ENCODE measurements at regions of chr20 and their contacts with region 1.

Region 1: GRCh38 chr20:9903048-9903655 is 64.3 kb upstream of the PAK5 start:
- DNase-seq: peak; percentile 26
- ATAC-seq: peak; percentile 71
- H3K4me3 ChIP-seq: no peak overlapping the region
- H3K27ac ChIP-seq: no peak overlapping the region
- H3K4me1 ChIP-seq: no peaks in the 10 kb centered on the region
- H3K27me3 ChIP-seq: peaks cover 12% of the 10 kb centered on the region; the same call in 1 of the 2 replicates
- CTCF ChIP-seq: peak in 2 of 3 experiments; percentile 76 to 77; a peak in 4 of 6 replicates
- POLR2A ChIP-seq: no peak
- RAD21 ChIP-seq: no peak; the same call in 1 of the 2 replicates

Region 2: DNA sequence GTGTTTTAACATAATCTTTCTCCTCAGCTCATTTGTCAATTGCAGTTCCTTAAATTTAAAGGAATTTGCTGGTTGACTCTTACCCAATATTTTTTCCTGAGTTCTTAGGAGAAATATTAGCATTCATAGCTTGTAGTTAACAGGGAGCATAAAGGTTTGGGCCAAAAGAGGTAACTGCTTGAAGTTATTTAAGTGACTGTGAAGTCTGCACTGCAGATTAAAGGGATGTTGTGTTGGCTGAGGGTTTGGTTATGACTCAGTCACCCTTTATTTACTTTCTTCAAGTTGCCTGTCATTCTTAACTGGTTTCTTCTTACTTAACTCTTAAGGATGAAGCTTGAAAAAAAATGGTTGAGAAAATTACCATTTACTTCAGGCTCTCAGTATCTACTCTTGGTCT is 609.1 kb before region 1 on chr20:
- CTCF ChIA-PET with region 1: no interaction called
- POLR2A ChIA-PET with region 1: no interaction called
- RAD21 ChIA-PET with region 1: no interaction called
- intact Hi-C with region 1: no loop called
- DNase-seq: no peak
- ATAC-seq: no peak
- H3K4me3 ChIP-seq: no peak overlapping the region
- H3K27ac ChIP-seq: no peak overlapping the region
- H3K4me1 ChIP-seq: peaks cover 6% of the 10 kb centered on the region in 2 experiments; a peak in 2 of 4 replicates
- H3K27me3 ChIP-seq: no peaks in the 10 kb centered on the region
- CTCF ChIP-seq: no peak
- POLR2A ChIP-seq: no peak
- RAD21 ChIP-seq: no peak

Region 3: DNA sequence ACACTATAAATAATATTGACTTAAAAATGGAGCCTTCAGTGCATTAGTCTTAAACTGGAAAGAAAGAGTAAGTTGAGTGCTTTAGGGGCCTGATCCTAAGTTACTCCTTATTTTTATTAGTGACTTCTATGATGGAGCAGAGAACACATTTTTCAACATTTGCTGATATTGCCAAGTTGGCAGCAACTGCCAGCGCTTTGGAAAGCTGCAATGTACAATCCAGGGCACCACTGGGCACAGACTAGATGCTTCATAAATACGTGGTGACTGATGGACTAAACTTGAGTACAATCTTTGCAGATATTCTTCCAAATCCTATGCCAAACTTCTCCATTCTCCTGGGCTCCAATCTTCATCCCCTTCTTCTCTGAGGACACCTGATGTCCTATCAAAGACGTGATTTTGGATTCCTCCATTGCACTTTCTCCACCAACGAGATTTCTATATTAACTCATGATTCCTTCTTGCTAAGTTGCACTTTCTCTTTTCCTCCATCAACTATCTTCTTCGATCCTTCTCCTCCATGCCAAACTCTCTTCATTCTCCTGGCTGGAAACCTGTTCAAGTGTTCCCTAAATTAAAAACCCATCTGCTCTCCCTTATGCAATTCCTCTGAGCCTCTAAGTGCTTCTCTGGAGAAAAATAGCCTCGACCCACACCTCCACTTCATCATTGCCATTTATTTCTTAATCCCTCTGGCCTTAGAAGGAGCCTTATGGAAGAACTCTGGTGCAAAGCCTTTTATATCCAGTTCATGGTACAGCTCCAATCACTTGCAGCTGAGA is 35.8 kb before region 1 on chr20:
- CTCF ChIA-PET with region 1: no interaction called
- POLR2A ChIA-PET with region 1: no interaction called
- RAD21 ChIA-PET with region 1: no interaction called
- intact Hi-C with region 1: no loop called
- DNase-seq: no peak
- ATAC-seq: no peak
- H3K4me3 ChIP-seq: no peak overlapping the region
- H3K27ac ChIP-seq: no peak overlapping the region
- H3K4me1 ChIP-seq: no peaks in the 10 kb centered on the region
- H3K27me3 ChIP-seq: peaks cover 4% of the 10 kb centered on the region; the same call in 1 of the 2 replicates
- CTCF ChIP-seq: no peak
- POLR2A ChIP-seq: no peak
- RAD21 ChIP-seq: no peak

Region 4: DNA sequence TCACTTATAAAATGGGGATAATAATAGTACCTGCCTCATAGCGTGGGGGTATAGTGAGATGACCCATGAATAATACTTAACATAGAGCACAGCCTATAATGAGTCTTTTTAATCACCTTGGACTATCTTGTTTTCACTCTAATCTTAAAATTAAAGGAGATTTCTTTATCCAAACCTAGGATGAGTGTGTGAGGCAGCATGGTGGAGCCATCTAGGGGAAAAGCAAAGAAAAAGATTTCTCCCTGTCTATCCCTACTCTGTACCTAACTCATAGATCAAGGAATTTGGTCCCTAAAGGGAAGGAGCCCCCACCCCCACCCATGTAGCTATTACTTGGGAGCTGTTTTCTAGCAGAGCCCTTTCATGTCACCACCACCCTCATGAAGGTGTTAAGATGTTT is 19.1 kb before region 1 on chr20:
- CTCF ChIA-PET with region 1: interaction called, 10 read pairs
- POLR2A ChIA-PET with region 1: no interaction called
- RAD21 ChIA-PET with region 1: no interaction called
- intact Hi-C with region 1: no loop called
- DNase-seq: no peak
- ATAC-seq: peak; percentile 88
- H3K4me3 ChIP-seq: no peak overlapping the region
- H3K27ac ChIP-seq: no peak overlapping the region
- H3K4me1 ChIP-seq: peaks cover 0 to 4% of the 10 kb centered on the region in 2 experiments; a peak in 1 of 4 replicates
- H3K27me3 ChIP-seq: no peaks in the 10 kb centered on the region
- CTCF ChIP-seq: peak; percentile 15 to 44 (median 32); a peak in 3 of 6 replicates
- POLR2A ChIP-seq: no peak
- RAD21 ChIP-seq: peak; percentile 47

Region 5: DNA sequence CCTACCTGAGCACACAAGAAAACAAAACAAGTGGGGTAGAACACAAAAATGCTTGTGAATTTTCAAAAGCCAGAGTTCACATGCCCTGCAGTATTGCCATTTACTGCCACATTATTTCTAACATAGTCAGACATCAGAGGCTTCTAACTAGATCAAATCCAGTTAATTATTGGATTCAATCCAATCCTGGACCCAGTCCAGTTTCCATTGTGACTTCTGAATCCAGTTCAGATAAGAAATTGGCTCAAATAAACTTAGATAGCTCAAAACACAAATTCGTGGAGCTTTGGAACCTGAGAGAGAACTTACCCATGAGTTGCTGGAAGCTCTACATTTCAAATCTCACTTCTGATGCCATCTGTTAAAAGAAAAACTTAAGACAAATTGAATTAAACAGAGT is 46.4 kb after region 1 on chr20:
- CTCF ChIA-PET with region 1: interaction called, 11 read pairs
- POLR2A ChIA-PET with region 1: no interaction called
- RAD21 ChIA-PET with region 1: no interaction called
- intact Hi-C with region 1: no loop called
- DNase-seq: no peak
- ATAC-seq: no peak
- H3K4me3 ChIP-seq: no peak overlapping the region
- H3K27ac ChIP-seq: no peak overlapping the region
- H3K4me1 ChIP-seq: peaks cover 14 to 16% of the 10 kb centered on the region in 2 experiments; a peak in 3 of 4 replicates
- H3K27me3 ChIP-seq: no peaks in the 10 kb centered on the region
- CTCF ChIP-seq: no peak
- POLR2A ChIP-seq: no peak
- RAD21 ChIP-seq: no peak

Region 6: DNA sequence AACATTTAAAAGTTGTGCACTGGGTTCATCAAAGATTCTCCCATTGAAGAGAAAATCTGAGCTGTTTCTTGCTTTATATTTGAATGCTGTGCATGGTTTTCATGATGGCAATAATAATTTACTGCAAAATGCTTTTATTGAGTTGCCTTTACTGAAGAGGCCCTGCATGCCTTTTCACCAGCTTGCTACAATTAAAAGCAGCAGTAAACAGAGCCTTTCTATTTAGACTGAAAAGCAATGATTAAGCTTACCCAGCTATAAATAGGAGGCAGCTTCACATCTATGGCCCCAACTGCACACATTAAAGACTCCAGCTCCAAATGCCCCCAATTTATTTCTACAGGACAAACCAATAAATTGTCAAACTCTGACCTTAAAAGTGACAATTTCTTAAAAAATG is 201.9 kb after region 1 on chr20:
- CTCF ChIA-PET with region 1: no interaction called
- POLR2A ChIA-PET with region 1: no interaction called
- RAD21 ChIA-PET with region 1: no interaction called
- intact Hi-C with region 1: no loop called
- DNase-seq: no peak
- ATAC-seq: no peak
- H3K4me3 ChIP-seq: no peak overlapping the region
- H3K27ac ChIP-seq: no peak overlapping the region
- H3K4me1 ChIP-seq: no peaks in the 10 kb centered on the region
- H3K27me3 ChIP-seq: peaks cover 5% of the 10 kb centered on the region; the same call in 1 of the 2 replicates
- CTCF ChIP-seq: no peak
- POLR2A ChIP-seq: no peak
- RAD21 ChIP-seq: no peak

Region 7: GRCh38 chr20:10157549-10157948 is 254.4 kb after region 1 on chr20:
- CTCF ChIA-PET with region 1: no interaction called
- POLR2A ChIA-PET with region 1: no interaction called
- RAD21 ChIA-PET with region 1: no interaction called
- intact Hi-C with region 1: no loop called
- DNase-seq: no peak
- ATAC-seq: no peak
- H3K4me3 ChIP-seq: no peak overlapping the region
- H3K27ac ChIP-seq: no peak overlapping the region
- H3K4me1 ChIP-seq: no peaks in the 10 kb centered on the region
- H3K27me3 ChIP-seq: no peaks in the 10 kb centered on the region
- CTCF ChIP-seq: no peak
- POLR2A ChIP-seq: no peak
- RAD21 ChIP-seq: no peak

Measured in HCT116 (cell line).